Naive thymus-derived CD4-positive, alpha-beta T cell (primary cell): ENCODE measurements at regions of chr5 and their contacts with region 1.

Region 1: DNA sequence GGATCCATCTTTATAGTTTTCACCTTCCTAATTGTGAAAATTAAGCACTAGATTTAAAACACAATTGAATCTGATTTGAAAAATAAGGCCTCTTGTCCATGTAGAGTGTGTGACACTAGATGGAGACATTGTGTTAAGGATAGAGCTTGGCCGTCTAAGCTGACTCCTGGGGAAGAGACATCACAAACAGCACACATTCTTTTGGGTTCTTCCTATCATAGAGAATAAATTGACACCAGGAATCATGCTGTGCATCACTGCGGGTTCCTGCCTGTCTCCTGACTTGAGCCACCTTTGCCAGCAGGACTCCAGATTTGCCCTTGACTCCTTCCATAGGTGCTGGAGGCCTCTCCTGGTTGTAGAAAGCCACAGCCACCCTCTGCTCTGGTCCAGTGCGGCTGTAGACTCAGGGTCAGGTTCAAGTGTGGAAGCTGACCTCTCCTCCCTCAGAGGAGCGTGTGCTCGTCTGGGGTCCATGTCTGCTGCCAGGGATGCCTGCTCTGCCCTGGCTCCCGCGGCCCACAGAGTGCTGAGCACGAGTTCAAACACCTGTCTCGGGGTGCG is 11.2 kb downstream of the ROPN1L start:
- DNase-seq: peak in 7 of 9 donors; percentile 24 to 62 (median 46)
- ATAC-seq: peak; percentile 85
- H3K4me3 ChIP-seq: no peak overlapping the region
- H3K4me3 Mint-ChIP-seq: no peak overlapping the region
- H3K27ac ChIP-seq: no peak overlapping the region
- H3K27ac Mint-ChIP-seq: peak overlapping the region in 2 of 9 donors; percentile 2 to 13
- H3K4me1 ChIP-seq: no peaks in the 10 kb centered on the region
- H3K4me1 Mint-ChIP-seq: peaks cover 6 to 28% (median 15%) of the 10 kb centered on the region in 7 donors
- H3K27me3 ChIP-seq: no peaks in the 10 kb centered on the region
- H3K27me3 Mint-ChIP-seq: no peaks in the 10 kb centered on the region

Region 2: DNA sequence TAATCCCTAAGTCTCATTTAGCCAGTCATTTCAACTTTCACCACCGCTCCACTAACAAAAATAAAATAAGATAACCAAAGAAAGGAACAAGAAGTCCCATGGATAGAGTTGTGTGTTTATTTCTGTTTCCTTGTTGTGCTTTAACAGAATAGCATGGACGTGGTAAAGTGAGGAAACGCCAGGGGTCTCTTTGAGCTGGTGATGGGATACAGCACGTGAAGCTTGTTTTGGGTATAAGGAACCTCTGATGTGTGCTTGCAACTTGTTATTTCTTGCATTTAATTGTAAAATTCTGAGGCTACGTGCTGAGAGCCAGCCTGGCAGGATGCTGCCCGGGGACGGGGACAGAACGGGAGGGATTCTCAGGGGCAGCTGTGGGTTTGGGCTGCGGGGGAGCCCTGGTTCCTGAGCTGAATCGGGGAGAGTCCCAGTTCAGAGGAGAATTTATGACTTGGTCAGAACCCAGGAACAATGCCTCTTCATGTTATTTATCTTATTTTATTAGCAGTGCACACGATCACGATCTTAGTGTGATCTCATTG is 174.4 kb after region 1 on chr5:
- CTCF ChIA-PET with region 1: interaction called, 68 read pairs
- POLR2A ChIA-PET with region 1: interaction called, 5 read pairs
- intact Hi-C with region 1: loop called (anchors 1 kb)
- DNase-seq: peak in 1 of 9 donors; percentile 8
- ATAC-seq: peak; percentile 1
- H3K4me3 ChIP-seq: peak overlapping the region; percentile 59
- H3K4me3 Mint-ChIP-seq: peak overlapping the region; percentile 78 to 95 (median 86)
- H3K27ac ChIP-seq: no peak overlapping the region
- H3K27ac Mint-ChIP-seq: peak overlapping the region; percentile 8 to 72 (median 49)
- H3K4me1 ChIP-seq: peaks cover 0 to 8% of the 10 kb centered on the region in 2 donors
- H3K4me1 Mint-ChIP-seq: peaks cover 13 to 43% (median 17%) of the 10 kb centered on the region in 7 donors
- H3K27me3 ChIP-seq: no peaks in the 10 kb centered on the region
- H3K27me3 Mint-ChIP-seq: peaks cover 0 to 7% (median 0%) of the 10 kb centered on the region in 5 donors

Region 3: DNA sequence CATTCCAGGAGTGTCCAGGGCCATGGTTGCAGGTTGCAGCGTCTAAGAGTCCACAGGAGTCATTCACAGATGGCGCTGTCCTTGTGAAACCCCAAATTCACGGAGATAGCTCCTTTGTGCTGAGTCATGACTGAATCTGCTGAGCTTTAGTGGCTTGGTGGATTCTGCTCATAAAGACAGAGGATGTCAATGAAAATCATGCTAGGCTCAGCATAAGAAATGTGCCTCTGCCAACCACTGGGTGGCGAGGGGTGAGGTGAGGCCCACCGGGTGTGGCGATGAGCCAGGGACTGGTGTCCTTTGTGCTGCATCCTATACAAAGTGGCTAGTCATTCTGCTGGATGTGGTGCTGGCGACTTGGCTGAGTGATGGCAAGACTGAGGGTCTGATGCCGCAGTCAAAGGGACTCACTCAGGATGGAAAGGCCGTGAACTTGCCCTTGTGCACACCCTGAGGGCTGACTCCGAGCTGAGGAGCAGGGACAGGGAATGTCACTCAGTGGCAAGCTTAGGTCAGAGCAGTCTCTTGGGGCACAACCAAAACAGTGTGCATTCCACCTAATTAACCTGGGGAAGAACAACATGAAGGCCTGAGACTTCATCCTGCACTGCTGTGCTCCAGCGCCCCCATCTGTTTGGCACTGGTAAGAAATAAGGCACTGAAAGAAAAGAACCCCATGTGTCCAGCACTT is 236.7 kb after region 1 on chr5:
- CTCF ChIA-PET with region 1: interaction called, 3 read pairs
- POLR2A ChIA-PET with region 1: no interaction called
- intact Hi-C with region 1: loop called in 1 of 2 experiments (anchors 1 kb)
- DNase-seq: peak in 1 of 9 donors; percentile 35
- ATAC-seq: peak; percentile 64
- H3K4me3 ChIP-seq: no peak overlapping the region
- H3K4me3 Mint-ChIP-seq: no peak overlapping the region
- H3K27ac ChIP-seq: no peak overlapping the region
- H3K27ac Mint-ChIP-seq: no peak overlapping the region
- H3K4me1 ChIP-seq: no peaks in the 10 kb centered on the region
- H3K4me1 Mint-ChIP-seq: peaks cover 0 to 16% (median 4%) of the 10 kb centered on the region in 7 donors
- H3K27me3 ChIP-seq: no peaks in the 10 kb centered on the region
- H3K27me3 Mint-ChIP-seq: no peaks in the 10 kb centered on the region

Region 4: GRCh38 chr5:10863763-10864383 is 411.0 kb after region 1 on chr5:
- CTCF ChIA-PET with region 1: no interaction called
- POLR2A ChIA-PET with region 1: no interaction called
- intact Hi-C with region 1: loop called in 1 of 2 experiments (anchors 5 kb)
- DNase-seq: peak in 7 of 9 donors; percentile 16 to 60 (median 31)
- ATAC-seq: peak; percentile 80
- H3K4me3 ChIP-seq: no peak overlapping the region
- H3K4me3 Mint-ChIP-seq: no peak overlapping the region
- H3K27ac ChIP-seq: no peak overlapping the region
- H3K27ac Mint-ChIP-seq: no peak overlapping the region
- H3K4me1 ChIP-seq: no peaks in the 10 kb centered on the region
- H3K4me1 Mint-ChIP-seq: peaks cover 0 to 4% (median 0%) of the 10 kb centered on the region in 7 donors
- H3K27me3 ChIP-seq: peaks cover 0 to 3% of the 10 kb centered on the region in 2 donors
- H3K27me3 Mint-ChIP-seq: peaks cover 0 to 23% (median 12%) of the 10 kb centered on the region in 5 donors

Region 5: DNA sequence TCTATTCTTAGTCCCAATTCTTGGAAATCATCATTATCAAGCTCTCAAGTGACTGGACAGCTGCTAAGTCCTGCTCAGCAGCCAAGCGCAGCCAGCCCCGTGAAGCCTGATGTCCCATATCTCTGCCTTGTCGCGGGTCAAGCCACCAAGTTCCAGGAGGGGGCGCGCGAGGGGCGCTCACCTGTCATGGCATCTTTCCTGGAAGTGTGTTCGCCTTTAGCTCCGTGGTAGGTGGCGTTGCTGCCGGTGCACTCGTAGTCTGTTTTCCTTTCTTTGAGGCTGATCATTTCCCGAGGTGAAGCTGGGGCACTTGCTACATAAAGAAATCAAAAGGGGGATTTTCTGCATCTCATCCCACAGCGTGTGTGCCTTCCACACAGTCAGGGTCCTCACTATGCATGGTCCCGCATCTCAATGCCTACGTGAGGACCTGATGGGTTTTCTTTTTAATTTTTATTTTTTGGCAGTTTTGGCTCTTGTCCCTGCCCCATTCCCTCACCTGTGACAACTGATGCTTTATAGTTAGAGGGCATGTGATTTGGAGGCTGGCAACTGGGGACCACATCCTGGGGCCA is 535.2 kb after region 1 on chr5:
- CTCF ChIA-PET with region 1: no interaction called
- POLR2A ChIA-PET with region 1: no interaction called
- intact Hi-C with region 1: loop called in 1 of 2 experiments (anchors 2 kb)
- DNase-seq: peak; percentile 21 to 58 (median 47)
- ATAC-seq: peak; percentile 72
- H3K4me3 ChIP-seq: peak overlapping the region; percentile 16
- H3K4me3 Mint-ChIP-seq: peak overlapping the region in 9 of 10 donors; percentile 1 to 77 (median 59)
- H3K27ac ChIP-seq: no peak overlapping the region
- H3K27ac Mint-ChIP-seq: no peak overlapping the region
- H3K4me1 ChIP-seq: peaks cover 0 to 6% of the 10 kb centered on the region in 2 donors
- H3K4me1 Mint-ChIP-seq: peaks cover 7 to 13% (median 10%) of the 10 kb centered on the region in 7 donors
- H3K27me3 ChIP-seq: no peaks in the 10 kb centered on the region
- H3K27me3 Mint-ChIP-seq: peaks cover 8 to 39% (median 25%) of the 10 kb centered on the region in 5 donors

Region 6: DNA sequence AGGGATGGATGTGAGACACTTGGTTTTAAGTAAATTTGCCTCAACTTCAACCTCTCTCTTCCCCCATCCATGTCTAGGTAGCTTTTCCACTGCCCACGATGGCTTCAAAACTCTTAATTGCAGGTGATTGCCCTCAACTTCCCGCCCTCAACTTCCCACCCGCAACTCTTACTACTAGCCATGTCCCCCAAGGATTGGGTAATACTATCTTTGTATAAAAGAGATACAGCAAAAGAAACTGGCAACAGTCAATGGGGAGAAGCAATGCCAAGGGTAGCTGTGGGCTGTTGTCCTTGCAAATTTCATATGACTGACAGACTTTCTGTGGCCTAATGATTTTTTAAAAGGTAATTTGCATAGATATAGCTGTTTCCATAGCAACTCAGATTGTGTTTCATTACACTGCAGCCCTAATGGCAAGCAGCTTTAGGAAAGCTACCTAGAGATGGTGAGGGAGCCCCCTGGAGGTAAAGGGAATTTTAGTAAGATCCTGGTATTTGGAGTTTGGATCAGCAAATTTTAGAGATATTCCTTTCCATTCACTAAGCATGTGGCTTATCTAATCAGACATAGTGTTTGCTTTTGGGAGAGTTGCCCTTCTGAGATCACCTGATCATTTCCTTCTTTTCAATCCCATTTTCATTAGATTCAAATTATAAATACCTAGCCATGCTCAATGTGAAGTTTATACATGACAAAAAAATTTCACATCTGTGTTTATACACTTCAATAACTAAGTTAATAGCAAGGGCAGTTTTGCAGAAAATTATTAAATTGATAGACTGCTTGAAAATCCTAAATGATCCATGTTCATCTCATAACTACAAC is 729.8 kb after region 1 on chr5:
- CTCF ChIA-PET with region 1: no interaction called
- POLR2A ChIA-PET with region 1: no interaction called
- intact Hi-C with region 1: loop called in 1 of 2 experiments (anchors 5 kb)
- DNase-seq: no peak
- ATAC-seq: no peak
- H3K4me3 ChIP-seq: no peak overlapping the region
- H3K4me3 Mint-ChIP-seq: no peak overlapping the region
- H3K27ac ChIP-seq: no peak overlapping the region
- H3K27ac Mint-ChIP-seq: no peak overlapping the region
- H3K4me1 ChIP-seq: no peaks in the 10 kb centered on the region
- H3K4me1 Mint-ChIP-seq: no peaks in the 10 kb centered on the region
- H3K27me3 ChIP-seq: no peaks in the 10 kb centered on the region
- H3K27me3 Mint-ChIP-seq: peaks cover 0 to 12% (median 4%) of the 10 kb centered on the region in 5 donors

Region 7: DNA sequence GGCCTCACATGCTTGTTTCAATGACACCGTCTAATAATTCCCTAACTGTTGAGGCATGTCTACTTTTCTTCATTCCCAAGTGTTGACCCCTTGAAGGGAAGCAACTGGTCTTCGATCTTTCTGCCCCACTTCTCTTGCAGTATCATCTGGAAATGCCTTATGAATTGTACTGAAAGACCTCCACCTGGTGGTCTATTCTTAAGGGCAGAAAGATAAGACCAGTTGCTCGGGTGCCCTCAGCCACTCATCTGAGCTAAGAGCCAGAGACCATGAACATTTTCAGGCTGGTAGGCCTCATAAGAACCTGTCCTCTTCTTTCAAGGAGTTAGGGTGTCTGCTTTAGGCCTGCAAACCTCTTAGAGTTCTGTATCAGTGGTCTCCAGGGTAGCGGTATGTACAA is 908.9 kb after region 1 on chr5:
- CTCF ChIA-PET with region 1: no interaction called
- POLR2A ChIA-PET with region 1: no interaction called
- intact Hi-C with region 1: loop called in 1 of 2 experiments (anchors 10 kb)
- DNase-seq: no peak
- ATAC-seq: no peak
- H3K4me3 ChIP-seq: no peak overlapping the region
- H3K4me3 Mint-ChIP-seq: no peak overlapping the region
- H3K27ac ChIP-seq: no peak overlapping the region
- H3K27ac Mint-ChIP-seq: no peak overlapping the region
- H3K4me1 ChIP-seq: no peaks in the 10 kb centered on the region
- H3K4me1 Mint-ChIP-seq: no peaks in the 10 kb centered on the region
- H3K27me3 ChIP-seq: no peaks in the 10 kb centered on the region
- H3K27me3 Mint-ChIP-seq: peaks cover 0 to 6% (median 0%) of the 10 kb centered on the region in 5 donors